ENCODE measurements at regions of chr11 and their contacts with region 1.

Region 1: GRCh38 chr11:107741044-107741823 is 29.4 kb upstream of the SLN start:
- H3K4me3 Mint-ChIP-seq: no peak overlapping the region
- H3K27ac Mint-ChIP-seq: no peak overlapping the region
- H3K4me1 Mint-ChIP-seq: no peaks in the 10 kb centered on the region
- H3K27me3 Mint-ChIP-seq: peaks cover 4% of the 10 kb centered on the region

Region 2: DNA sequence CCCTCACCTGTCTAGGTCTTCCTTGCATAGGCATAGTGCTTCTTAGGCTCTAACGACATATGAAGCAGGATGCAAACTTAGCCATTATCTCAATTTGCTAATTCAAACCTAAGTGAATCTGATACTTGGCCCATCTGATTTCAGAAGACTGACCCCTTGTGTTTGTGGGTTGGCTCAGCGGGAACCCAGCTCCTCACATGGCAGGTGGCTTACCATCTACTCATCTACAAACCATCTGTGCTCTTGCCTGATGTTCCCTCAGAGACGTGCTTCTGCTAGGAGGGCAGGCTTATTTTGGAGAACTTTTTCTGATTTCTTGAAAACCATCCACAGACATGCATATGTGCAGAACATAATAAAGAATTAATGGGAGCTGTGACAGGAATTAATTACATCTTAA is 135.1 kb before region 1 on chr11:
- intact Hi-C with region 1: no loop called
- H3K4me3 Mint-ChIP-seq: no peak overlapping the region
- H3K27ac Mint-ChIP-seq: no peak overlapping the region
- H3K4me1 Mint-ChIP-seq: no peaks in the 10 kb centered on the region
- H3K27me3 Mint-ChIP-seq: peaks cover 22% of the 10 kb centered on the region

Region 3: DNA sequence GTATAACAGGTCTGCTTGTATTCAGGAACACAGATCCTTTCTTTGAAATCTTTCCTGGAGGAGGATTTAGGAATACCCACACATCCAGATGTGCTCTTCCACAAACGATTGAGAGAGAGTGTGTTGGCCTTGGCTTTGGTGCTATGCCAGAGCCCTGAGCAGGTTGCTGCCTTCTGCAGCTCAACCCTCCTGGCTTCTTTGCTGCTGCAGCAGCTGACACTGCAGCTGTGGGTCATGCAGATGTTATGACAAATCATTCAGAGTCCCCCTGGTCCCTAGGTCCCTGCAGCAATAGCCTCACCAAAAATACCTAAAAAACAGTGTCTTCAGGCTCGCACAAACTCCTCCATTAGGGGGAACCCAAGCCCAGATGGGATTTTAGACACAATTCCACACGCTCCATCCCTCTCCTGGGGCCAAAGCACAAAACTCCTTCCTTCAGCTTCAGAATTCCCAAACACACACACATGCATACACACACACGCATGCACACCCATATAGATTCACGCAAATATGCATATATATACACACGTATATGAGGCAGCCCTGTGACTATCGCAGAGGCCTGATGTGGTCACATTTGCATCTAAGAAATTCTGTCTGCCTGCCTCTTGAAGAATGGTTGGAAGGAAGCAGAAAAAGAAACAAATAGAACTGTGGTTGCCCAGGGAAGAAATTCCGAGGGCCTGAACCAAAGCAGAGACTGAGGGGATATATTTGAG is 64.7 kb before region 1 on chr11:
- intact Hi-C with region 1: no loop called
- H3K4me3 Mint-ChIP-seq: no peak overlapping the region
- H3K27ac Mint-ChIP-seq: no peak overlapping the region
- H3K4me1 Mint-ChIP-seq: no peaks in the 10 kb centered on the region
- H3K27me3 Mint-ChIP-seq: peaks cover 1% of the 10 kb centered on the region

Region 4: GRCh38 chr11:107808521-107808920 is 67.3 kb after region 1 on chr11:
- intact Hi-C with region 1: no loop called
- H3K4me3 Mint-ChIP-seq: no peak overlapping the region
- H3K27ac Mint-ChIP-seq: no peak overlapping the region
- H3K4me1 Mint-ChIP-seq: peaks cover 6% of the 10 kb centered on the region
- H3K27me3 Mint-ChIP-seq: peaks cover 2% of the 10 kb centered on the region

Region 5: GRCh38 chr11:107898270-107898669 is 157.0 kb after region 1 on chr11:
- intact Hi-C with region 1: loop called (anchors 2 kb)
- H3K4me3 Mint-ChIP-seq: no peak overlapping the region
- H3K27ac Mint-ChIP-seq: no peak overlapping the region
- H3K4me1 Mint-ChIP-seq: peaks cover 6% of the 10 kb centered on the region
- H3K27me3 Mint-ChIP-seq: peaks cover 6% of the 10 kb centered on the region